BJ (cell line): ENCODE measurements at regions of chr11 and their contacts with region 1.

Region 1: DNA sequence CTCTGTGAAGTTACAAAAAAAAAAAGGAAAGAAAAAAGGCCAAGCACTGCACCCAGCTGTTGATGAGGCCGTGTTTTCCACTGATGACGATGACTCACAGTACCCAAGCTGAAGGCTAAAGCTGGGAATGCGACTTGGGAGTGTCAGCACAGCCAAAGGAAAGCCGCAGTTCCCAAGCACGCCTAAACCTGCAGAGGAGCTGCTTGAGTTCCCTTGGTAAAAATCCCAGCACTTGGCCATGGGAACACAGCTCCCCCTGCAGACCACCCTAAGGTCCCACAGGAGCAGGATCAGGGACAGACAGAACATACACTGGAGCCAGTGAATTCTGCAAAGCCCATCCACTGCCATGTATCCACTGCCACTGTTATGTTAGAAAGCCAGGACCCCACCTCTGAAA is 39.9 kb downstream of the SERGEF start:
- DNase-seq: peak; percentile 71
- H3K4me3 ChIP-seq: no peak overlapping the region
- H3K27me3 ChIP-seq: no peaks in the 10 kb centered on the region
- CTCF ChIP-seq: peak; percentile 86

Region 2: GRCh38 chr11:17770048-17770652 is 202.8 kb before region 1 on chr11:
- CTCF ChIA-PET with region 1: interaction called, 65 read pairs
- POLR2A ChIA-PET with region 1: no interaction called
- DNase-seq: no peak
- H3K4me3 ChIP-seq: no peak overlapping the region
- H3K27me3 ChIP-seq: no peaks in the 10 kb centered on the region; the same call in 1 of the 2 replicates
- CTCF ChIP-seq: peak; percentile 9; the same call in 1 of the 2 replicates

Region 3: GRCh38 chr11:17939542-17939941 is 33.4 kb before region 1 on chr11:
- CTCF ChIA-PET with region 1: no interaction called
- POLR2A ChIA-PET with region 1: no interaction called
- DNase-seq: no peak
- H3K4me3 ChIP-seq: no peak overlapping the region
- H3K27me3 ChIP-seq: no peaks in the 10 kb centered on the region
- CTCF ChIP-seq: no peak

Region 4: DNA sequence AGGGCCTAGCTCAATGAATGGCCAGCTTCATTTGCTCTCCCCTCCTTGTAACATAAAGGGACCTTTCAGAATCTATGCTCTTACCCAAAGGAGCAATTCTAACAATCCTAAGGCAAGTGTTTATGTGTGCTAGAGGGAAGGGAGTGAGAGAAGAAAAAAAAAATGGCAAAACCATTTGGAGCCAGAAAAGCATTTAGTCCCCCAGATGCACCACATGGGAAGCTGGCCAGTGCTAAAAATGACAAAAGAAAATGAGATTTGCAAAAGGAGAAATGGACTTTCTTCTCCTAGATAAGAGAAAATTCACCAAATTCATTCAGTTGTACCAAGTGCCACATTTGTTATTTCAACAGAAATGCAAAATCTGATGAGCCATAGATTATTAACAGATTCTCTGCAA is 12.9 kb before region 1 on chr11:
- CTCF ChIA-PET with region 1: interaction called, 13 read pairs
- POLR2A ChIA-PET with region 1: no interaction called
- DNase-seq: no peak
- H3K4me3 ChIP-seq: no peak overlapping the region
- H3K27me3 ChIP-seq: no peaks in the 10 kb centered on the region
- CTCF ChIP-seq: no peak

Region 5: GRCh38 chr11:17986007-17986710 is 13.2 kb after region 1 on chr11:
- CTCF ChIA-PET with region 1: interaction called, 82 read pairs
- POLR2A ChIA-PET with region 1: no interaction called
- DNase-seq: peak; percentile 47
- H3K4me3 ChIP-seq: no peak overlapping the region
- H3K27me3 ChIP-seq: no peaks in the 10 kb centered on the region
- CTCF ChIP-seq: no peak

Region 6: GRCh38 chr11:18000760-18001159 is 27.8 kb after region 1 on chr11:
- CTCF ChIA-PET with region 1: no interaction called
- POLR2A ChIA-PET with region 1: no interaction called
- DNase-seq: no peak
- H3K4me3 ChIP-seq: no peak overlapping the region
- H3K27me3 ChIP-seq: no peaks in the 10 kb centered on the region
- CTCF ChIP-seq: no peak

Region 7: DNA sequence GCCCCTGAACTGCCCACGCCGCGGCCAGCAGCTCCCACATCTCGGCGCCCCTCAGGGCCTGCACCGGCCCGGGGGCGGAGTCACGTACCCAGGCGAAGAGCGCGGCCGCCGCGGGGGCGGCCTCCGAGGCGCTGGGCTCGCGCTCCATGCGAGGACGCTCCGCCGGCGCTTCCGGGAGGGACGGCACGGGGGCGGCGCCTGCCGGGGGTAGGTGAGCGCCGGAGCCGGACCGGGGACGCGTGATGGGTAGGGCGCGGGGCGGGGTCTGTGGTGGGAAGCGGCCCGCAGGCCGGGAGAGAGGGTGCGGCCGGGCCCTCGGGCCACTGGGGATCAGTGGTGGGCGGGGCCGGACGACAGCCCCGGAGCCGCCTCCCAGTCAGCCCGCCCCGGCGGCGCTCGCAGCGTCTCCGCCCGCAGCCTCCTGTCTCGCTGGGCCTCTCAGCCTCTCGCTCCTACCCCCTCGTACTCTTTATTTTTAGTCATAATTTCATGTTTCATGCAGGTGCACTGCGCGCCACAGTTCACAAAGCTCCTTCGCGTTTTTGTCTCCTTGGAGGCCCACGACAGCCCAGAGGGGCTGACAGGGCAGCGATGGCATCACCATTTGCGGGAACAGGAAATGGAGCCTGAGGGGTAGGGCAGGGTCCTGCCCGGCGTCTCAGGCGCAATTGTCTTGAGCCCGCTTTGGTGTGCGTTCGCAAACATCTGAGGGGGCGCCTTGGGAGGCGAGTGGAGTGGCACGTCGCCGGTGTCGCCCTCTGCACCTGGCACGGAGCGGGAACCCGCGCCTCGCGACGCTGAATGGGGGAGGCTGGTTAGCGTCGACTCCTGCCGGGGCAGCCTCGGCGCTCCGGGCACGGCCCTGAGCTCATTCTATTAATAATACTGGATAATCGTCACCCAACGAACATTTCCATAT is 40.1 kb after region 1 on chr11 and contains the start of gene SERGEF:
- CTCF ChIA-PET with region 1: interaction called, 8 read pairs
- POLR2A ChIA-PET with region 1: interaction called, 13 read pairs
- DNase-seq: peak; percentile 33
- H3K4me3 ChIP-seq: peak within 1 kb of the TSS; percentile 86
- H3K27me3 ChIP-seq: no peaks in the 10 kb centered on the region
- CTCF ChIP-seq: no peak
- polyA plus RNA-seq, gene SERGEF: 17.2 and 17.4 TPM in 2 replicates

Region 8: GRCh38 chr11:18321980-18322711 is 349.2 kb after region 1 on chr11 and contains the starts of genes GTF2H1 and HPS5:
- CTCF ChIA-PET with region 1: no interaction called
- POLR2A ChIA-PET with region 1: no interaction called
- DNase-seq: peak; percentile 84
- H3K4me3 ChIP-seq: peak within 1 kb of the TSS; percentile 65
- H3K27me3 ChIP-seq: no peaks in the 10 kb centered on the region
- CTCF ChIP-seq: no peak
- polyA plus RNA-seq, gene GTF2H1: 24.9 and 42.9 TPM in 2 replicates
- polyA plus RNA-seq, gene HPS5: 15.3 and 23.2 TPM in 2 replicates